Naive thymus-derived CD4-positive, alpha-beta T cell (primary cell): ENCODE measurements at regions of chr10 and their contacts with region 1.

Region 1: DNA sequence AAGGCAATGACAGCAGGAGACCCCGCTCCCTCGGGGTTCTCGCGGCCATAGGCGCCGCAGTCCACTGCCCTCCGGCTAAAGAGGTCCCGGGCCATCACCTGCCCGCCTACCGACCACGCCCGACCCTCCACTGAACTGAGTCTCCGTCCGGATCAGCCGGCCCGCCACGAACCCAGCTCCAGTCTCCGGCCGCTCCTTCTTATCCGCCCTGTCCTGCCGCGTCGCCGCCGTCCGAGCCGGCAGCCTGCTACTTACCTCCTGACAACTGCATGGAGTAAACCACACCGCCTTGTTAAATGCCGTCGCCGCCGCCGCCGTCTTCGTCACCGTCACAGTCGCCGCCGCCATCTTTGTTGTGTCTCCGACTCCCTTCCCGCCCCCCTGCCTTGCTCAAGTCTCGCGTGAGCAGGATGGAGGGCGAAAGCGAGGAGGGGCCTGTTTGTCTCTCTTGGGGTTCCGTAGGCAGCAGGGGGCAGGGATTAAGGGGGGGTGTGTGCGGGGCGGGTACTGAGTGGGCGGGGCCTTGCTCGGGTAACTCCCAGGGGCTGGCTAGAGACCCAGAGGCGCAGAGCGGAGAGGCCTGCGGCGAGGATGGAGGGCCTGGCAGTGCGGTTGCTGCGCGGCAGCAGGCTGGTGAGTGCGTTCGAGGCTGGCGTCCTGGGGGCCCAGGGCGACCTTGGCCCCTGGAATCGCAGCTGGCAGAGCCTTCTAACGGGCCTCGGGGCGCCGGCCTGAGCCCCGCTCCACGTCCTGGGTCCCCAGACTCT is at the starts of genes ACADSB and IKZF5:
- DNase-seq: peak; percentile 83 to 98 (median 96)
- ATAC-seq: peak; percentile 97
- H3K4me3 ChIP-seq: peak within 1 kb of the TSS; percentile 93
- H3K4me3 Mint-ChIP-seq: peak within 1 kb of the TSS; percentile 91 to 100 (median 100)
- H3K27ac ChIP-seq: peak within 1 kb of the TSS; percentile 92
- H3K27ac Mint-ChIP-seq: peak within 1 kb of the TSS; percentile 99 to 100 (median 100)
- H3K4me1 ChIP-seq: peaks cover 28 to 29% of the 10 kb centered on the region in 2 donors
- H3K4me1 Mint-ChIP-seq: peaks cover 28 to 77% (median 70%) of the 10 kb centered on the region in 7 donors
- H3K27me3 ChIP-seq: no peaks in the 10 kb centered on the region
- H3K27me3 Mint-ChIP-seq: no peaks in the 10 kb centered on the region
- total RNA-seq, gene ACADSB: 23.7 to 47.0 (median 27.3) TPM
- total RNA-seq, gene IKZF5: 15.8 to 57.7 (median 37.2) TPM

Region 2: DNA sequence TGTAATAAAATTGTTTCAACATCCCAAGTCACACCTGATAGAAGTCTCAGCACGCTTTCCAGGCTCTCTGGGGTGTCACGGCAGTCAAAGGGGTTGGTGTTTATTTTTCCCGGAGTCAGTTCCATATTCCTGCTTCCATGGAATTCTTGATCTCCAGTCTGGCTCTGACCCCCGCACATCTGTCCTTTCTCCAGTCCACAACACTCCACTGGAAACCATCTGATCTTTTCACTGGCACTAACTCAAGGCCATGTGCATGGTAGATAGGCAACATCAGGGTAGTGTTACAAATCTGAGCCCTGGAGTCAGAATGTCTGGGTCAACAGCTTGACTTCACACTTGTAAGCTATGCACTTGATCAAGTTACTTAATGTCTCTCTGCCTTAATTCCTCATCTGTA is 1981.3 kb before region 1 on chr10:
- CTCF ChIA-PET with region 1: no interaction called
- POLR2A ChIA-PET with region 1: no interaction called
- intact Hi-C with region 1: no loop called
- DNase-seq: no peak
- ATAC-seq: no peak
- H3K4me3 ChIP-seq: no peak overlapping the region
- H3K4me3 Mint-ChIP-seq: no peak overlapping the region
- H3K27ac ChIP-seq: no peak overlapping the region
- H3K27ac Mint-ChIP-seq: no peak overlapping the region
- H3K4me1 ChIP-seq: no peaks in the 10 kb centered on the region
- H3K4me1 Mint-ChIP-seq: no peaks in the 10 kb centered on the region
- H3K27me3 ChIP-seq: no peaks in the 10 kb centered on the region
- H3K27me3 Mint-ChIP-seq: peaks cover 0 to 10% (median 4%) of the 10 kb centered on the region in 5 donors

Region 3: DNA sequence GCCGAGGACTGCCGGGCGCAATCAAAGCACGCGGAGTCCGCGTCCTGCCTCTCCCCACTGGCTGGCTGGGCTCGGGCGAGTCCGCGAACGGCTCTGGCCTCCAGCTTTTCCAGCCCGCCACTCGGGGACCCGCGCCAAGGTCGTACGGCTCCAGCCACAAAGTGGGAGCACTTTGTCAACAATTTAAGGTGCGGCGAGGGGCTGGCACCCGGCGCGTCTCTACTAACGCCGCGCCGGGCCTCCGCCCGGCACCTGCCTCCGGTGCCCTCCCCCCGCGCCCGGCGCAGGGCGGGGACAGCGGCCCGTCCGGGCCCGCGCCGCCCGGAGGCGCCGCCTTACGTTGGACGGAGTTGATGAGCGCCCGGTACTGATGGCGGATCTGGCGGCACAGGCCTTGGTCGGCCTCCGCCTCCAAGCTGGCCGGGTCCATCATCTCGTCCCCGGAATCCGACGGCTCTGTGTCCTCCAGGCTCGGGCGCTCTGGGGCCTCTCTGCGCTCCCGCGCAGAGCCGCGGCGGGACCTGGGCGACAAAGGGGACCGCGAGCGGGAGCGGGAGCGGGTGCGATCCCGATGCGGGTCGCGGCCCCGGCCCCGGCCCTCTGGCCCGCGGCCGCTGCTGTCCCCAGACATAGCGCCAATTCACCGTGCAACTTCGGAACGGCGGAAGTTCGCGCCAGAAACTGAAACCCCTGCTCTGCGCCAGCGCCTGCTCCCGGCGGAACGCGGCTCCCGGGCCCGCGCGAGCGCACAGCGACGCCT is 1033.9 kb before region 1 on chr10 and contains the start of gene NSMCE4A:
- CTCF ChIA-PET with region 1: no interaction called
- POLR2A ChIA-PET with region 1: no interaction called
- intact Hi-C with region 1: loop called in 1 of 2 experiments (anchors 2 kb)
- DNase-seq: peak; percentile 47 to 81 (median 62)
- ATAC-seq: peak; percentile 90
- H3K4me3 ChIP-seq: peak within 1 kb of the TSS; percentile 86
- H3K4me3 Mint-ChIP-seq: peak within 1 kb of the TSS; percentile 72 to 86 (median 81)
- H3K27ac ChIP-seq: peak within 1 kb of the TSS; percentile 74
- H3K27ac Mint-ChIP-seq: peak within 1 kb of the TSS in 6 of 9 donors; percentile 36 to 77 (median 60)
- H3K4me1 ChIP-seq: peaks cover 6 to 11% of the 10 kb centered on the region in 2 donors
- H3K4me1 Mint-ChIP-seq: peaks cover 15 to 35% (median 22%) of the 10 kb centered on the region in 7 donors
- H3K27me3 ChIP-seq: no peaks in the 10 kb centered on the region
- H3K27me3 Mint-ChIP-seq: no peaks in the 10 kb centered on the region
- total RNA-seq, gene NSMCE4A: 34.7 to 87.2 (median 69.4) TPM

Region 4: DNA sequence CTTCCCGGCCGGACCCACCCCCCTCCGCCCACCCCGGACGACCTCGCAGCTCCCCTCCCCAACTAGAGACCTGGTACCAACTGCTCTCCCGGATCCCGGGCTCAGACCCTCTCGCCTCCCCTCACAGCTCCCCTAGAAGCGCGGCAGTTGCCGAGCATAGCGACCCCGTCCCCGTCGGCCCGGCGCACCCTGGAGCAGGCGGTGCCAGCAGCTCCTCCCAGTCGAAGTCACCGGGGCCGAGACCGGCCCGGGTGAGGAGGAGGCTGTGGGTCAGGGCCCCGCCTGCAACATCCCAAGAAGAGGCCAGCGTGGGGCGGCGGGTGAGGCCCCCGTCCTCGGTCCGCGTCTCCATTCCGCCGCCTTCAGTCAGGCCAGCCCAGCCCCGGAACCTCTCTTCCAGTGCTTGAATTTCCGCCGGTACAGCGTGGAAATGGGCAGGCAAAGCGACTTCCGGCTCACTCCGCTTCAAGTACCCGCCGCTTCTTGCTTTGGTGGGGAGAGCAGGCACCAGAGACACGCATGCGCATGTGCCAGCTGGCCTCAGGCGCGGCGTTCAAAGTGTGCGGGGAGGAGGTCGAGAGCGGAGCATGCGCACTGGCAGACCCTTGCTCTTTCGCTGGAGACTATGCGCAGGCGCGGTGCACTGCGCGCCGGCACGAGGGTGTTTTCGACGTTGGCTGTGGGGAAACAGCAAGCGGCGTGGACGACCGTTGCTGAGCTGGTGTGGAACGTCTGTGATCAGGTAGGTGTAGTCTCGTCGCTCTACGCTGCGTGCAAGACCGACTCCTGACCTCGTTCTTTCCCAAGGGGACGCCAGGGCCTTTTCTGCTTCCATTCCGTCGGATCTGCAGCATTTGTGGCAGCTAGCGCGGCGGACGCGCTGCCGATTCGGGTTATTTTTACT is 54.5 kb before region 1 on chr10 and contains the start of gene C10orf88:
- CTCF ChIA-PET with region 1: no interaction called
- POLR2A ChIA-PET with region 1: interaction called, 34 read pairs
- intact Hi-C with region 1: loop called (anchors 1 kb)
- DNase-seq: peak; percentile 92 to 98 (median 97)
- ATAC-seq: peak; percentile 97
- H3K4me3 ChIP-seq: peak within 1 kb of the TSS; percentile 69
- H3K4me3 Mint-ChIP-seq: peak within 1 kb of the TSS; percentile 85 to 96 (median 90)
- H3K27ac ChIP-seq: peak within 1 kb of the TSS; percentile 72
- H3K27ac Mint-ChIP-seq: peak within 1 kb of the TSS; percentile 77 to 98 (median 90)
- H3K4me1 ChIP-seq: peaks cover 16% of the 10 kb centered on the region in 2 donors
- H3K4me1 Mint-ChIP-seq: peaks cover 26 to 60% (median 39%) of the 10 kb centered on the region in 7 donors
- H3K27me3 ChIP-seq: no peaks in the 10 kb centered on the region
- H3K27me3 Mint-ChIP-seq: peaks cover 0 to 14% (median 0%) of the 10 kb centered on the region in 5 donors
- total RNA-seq, gene C10orf88: 5.2 to 16.8 (median 12.5) TPM

Region 5: GRCh38 chr10:123154092-123154921 is 145.7 kb after region 1 on chr10 and contains the start of gene BUB3:
- CTCF ChIA-PET with region 1: interaction called, 5 read pairs
- POLR2A ChIA-PET with region 1: interaction called, 12 read pairs
- intact Hi-C with region 1: loop called (anchors 1 kb)
- DNase-seq: peak; percentile 72 to 96 (median 94)
- ATAC-seq: peak; percentile 95
- H3K4me3 ChIP-seq: peak within 1 kb of the TSS; percentile 92
- H3K4me3 Mint-ChIP-seq: peak within 1 kb of the TSS; percentile 93 to 100 (median 99)
- H3K27ac ChIP-seq: peak within 1 kb of the TSS; percentile 80
- H3K27ac Mint-ChIP-seq: peak within 1 kb of the TSS; percentile 85 to 100 (median 96)
- H3K4me1 ChIP-seq: peaks cover 28 to 66% of the 10 kb centered on the region in 2 donors
- H3K4me1 Mint-ChIP-seq: peaks cover 35 to 85% (median 75%) of the 10 kb centered on the region in 7 donors
- H3K27me3 ChIP-seq: peaks cover 4 to 5% of the 10 kb centered on the region in 2 donors
- H3K27me3 Mint-ChIP-seq: peaks cover under 1 to 30% (median 7%) of the 10 kb centered on the region in 5 donors
- total RNA-seq, gene BUB3: 91.4 to 195 (median 171) TPM

Region 6: GRCh38 chr10:124418726-124419501 is 1410.3 kb after region 1 on chr10 and contains the start of gene OAT:
- CTCF ChIA-PET with region 1: no interaction called
- POLR2A ChIA-PET with region 1: no interaction called
- intact Hi-C with region 1: loop called (anchors 2 kb)
- DNase-seq: peak; percentile 90 to 96 (median 94)
- ATAC-seq: peak; percentile 99
- H3K4me3 ChIP-seq: peak within 1 kb of the TSS; percentile 76
- H3K4me3 Mint-ChIP-seq: peak within 1 kb of the TSS; percentile 80 to 91 (median 84)
- H3K27ac ChIP-seq: peak within 1 kb of the TSS; percentile 80
- H3K27ac Mint-ChIP-seq: peak within 1 kb of the TSS in 8 of 9 donors; percentile 31 to 90 (median 83)
- H3K4me1 ChIP-seq: peaks cover 8 to 10% of the 10 kb centered on the region in 2 donors
- H3K4me1 Mint-ChIP-seq: peaks cover 8 to 41% (median 31%) of the 10 kb centered on the region in 7 donors
- H3K27me3 ChIP-seq: no peaks in the 10 kb centered on the region
- H3K27me3 Mint-ChIP-seq: peaks cover 0 to 18% (median 2%) of the 10 kb centered on the region in 5 donors
- total RNA-seq, gene OAT: 29.6 to 47.0 (median 39.1) TPM

Region 7: GRCh38 chr10:124916585-124917427 is 1908.2 kb after region 1 on chr10:
- CTCF ChIA-PET with region 1: no interaction called
- POLR2A ChIA-PET with region 1: interaction called, 3 read pairs
- intact Hi-C with region 1: loop called in 1 of 2 experiments (anchors 2 kb)
- DNase-seq: peak; percentile 93 to 97 (median 96)
- ATAC-seq: peak; percentile 95
- H3K4me3 ChIP-seq: peak overlapping the region; percentile 97
- H3K4me3 Mint-ChIP-seq: peak overlapping the region; percentile 86 to 99 (median 94)
- H3K27ac ChIP-seq: peak overlapping the region; percentile 98
- H3K27ac Mint-ChIP-seq: peak overlapping the region; percentile 89 to 99 (median 94)
- H3K4me1 ChIP-seq: peaks cover 15 to 17% of the 10 kb centered on the region in 2 donors
- H3K4me1 Mint-ChIP-seq: peaks cover 30 to 49% (median 44%) of the 10 kb centered on the region in 7 donors
- H3K27me3 ChIP-seq: no peaks in the 10 kb centered on the region
- H3K27me3 Mint-ChIP-seq: peaks cover 0 to 8% (median 0%) of the 10 kb centered on the region in 5 donors